Right cardiac atrium (tissue), 5 donors: ENCODE measurements at regions of chr1 and their contacts with region 1.

Region 1: GRCh38 chr1:234499119-234499942 is 20.4 kb upstream of the TARBP1 start:
- DNase-seq: peak; percentile 90 to 97 (median 97)
- ATAC-seq: peak; percentile 95 to 96
- H3K4me3 ChIP-seq: peak overlapping the region; percentile 6
- H3K27ac ChIP-seq: peak overlapping the region; percentile 92
- H3K4me1 ChIP-seq: peaks cover 10% of the 10 kb centered on the region
- H3K27me3 ChIP-seq: no peaks in the 10 kb centered on the region

Region 2: DNA sequence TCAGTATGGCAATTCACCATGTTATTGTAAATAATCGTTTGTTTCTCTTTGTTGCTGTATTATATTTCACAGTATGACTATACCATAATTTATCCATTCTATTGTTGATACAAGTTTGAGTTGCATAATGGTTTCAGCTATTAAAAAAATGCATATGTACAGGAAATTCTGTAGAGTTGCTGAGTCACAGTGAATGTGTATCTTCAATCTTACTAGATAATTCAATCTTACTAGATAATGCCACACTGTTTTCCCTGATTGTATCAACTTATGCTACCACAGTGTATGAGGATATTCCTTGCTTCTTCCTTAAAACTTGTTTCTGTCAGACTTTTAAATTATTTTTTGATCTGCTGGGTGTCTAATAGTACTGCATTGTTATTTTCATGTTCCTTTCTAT is 129.5 kb before region 1 on chr1:
- intact Hi-C with region 1: no loop called
- DNase-seq: no peak
- ATAC-seq: no peak
- H3K4me3 ChIP-seq: no peak overlapping the region
- H3K27ac ChIP-seq: no peak overlapping the region
- H3K4me1 ChIP-seq: no peaks in the 10 kb centered on the region
- H3K27me3 ChIP-seq: no peaks in the 10 kb centered on the region

Region 3: GRCh38 chr1:234589854-234590620 is 90.7 kb after region 1 on chr1:
- intact Hi-C with region 1: loop called in 3 of 4 experiments (anchors 5 to 10 kb)
- DNase-seq: no peak
- ATAC-seq: peak; percentile 16 to 22
- H3K4me3 ChIP-seq: no peak overlapping the region
- H3K27ac ChIP-seq: peak overlapping the region; percentile 47
- H3K4me1 ChIP-seq: peaks cover 11% of the 10 kb centered on the region
- H3K27me3 ChIP-seq: no peaks in the 10 kb centered on the region

Region 4: DNA sequence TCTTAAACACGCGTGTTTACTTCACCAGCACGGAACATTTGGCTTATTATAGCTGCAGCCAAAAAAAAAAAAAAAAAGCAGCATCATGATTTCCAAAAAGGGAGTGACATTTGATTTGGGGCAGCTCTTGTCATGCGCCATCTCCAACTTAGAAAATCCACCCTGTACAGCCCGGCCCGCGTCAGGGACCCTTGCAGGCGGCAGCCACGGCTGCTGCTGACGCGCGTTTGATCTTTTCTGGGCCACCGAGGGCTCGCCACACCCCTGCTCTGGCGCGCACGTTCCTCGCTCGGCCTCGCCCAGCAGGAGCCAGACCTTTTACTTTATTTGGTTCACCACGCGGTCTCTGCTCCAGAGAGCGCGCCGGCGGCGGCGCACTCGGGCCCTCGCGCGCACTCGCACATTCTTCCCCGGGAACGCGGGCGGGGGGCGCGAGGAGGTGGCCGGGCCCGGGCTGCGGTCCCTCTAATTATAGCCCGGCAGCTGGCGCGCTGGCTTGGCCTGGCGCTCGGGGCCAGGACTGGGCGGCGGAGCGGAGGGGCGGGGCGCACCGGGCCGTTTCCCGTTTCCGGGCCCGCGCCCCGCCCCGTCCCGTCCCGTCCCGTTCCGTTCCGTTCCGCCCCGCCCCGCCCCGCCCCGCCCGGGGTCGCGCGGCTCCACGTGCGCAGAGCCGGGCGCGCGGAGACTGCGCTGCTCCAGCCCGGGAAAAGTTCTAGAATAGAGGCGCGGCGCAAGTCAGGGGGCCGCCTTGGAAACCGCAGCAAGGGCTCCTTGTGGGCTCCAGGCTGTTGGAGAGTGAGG is 100.5 kb after region 1 on chr1:
- intact Hi-C with region 1: loop called (anchors 2 to 10 kb)
- DNase-seq: peak; percentile 91 to 96 (median 96)
- ATAC-seq: peak; percentile 93 to 94
- H3K4me3 ChIP-seq: peak overlapping the region; percentile 44
- H3K27ac ChIP-seq: peak overlapping the region; percentile 97
- H3K4me1 ChIP-seq: no peaks in the 10 kb centered on the region
- H3K27me3 ChIP-seq: no peaks in the 10 kb centered on the region

Region 5: DNA sequence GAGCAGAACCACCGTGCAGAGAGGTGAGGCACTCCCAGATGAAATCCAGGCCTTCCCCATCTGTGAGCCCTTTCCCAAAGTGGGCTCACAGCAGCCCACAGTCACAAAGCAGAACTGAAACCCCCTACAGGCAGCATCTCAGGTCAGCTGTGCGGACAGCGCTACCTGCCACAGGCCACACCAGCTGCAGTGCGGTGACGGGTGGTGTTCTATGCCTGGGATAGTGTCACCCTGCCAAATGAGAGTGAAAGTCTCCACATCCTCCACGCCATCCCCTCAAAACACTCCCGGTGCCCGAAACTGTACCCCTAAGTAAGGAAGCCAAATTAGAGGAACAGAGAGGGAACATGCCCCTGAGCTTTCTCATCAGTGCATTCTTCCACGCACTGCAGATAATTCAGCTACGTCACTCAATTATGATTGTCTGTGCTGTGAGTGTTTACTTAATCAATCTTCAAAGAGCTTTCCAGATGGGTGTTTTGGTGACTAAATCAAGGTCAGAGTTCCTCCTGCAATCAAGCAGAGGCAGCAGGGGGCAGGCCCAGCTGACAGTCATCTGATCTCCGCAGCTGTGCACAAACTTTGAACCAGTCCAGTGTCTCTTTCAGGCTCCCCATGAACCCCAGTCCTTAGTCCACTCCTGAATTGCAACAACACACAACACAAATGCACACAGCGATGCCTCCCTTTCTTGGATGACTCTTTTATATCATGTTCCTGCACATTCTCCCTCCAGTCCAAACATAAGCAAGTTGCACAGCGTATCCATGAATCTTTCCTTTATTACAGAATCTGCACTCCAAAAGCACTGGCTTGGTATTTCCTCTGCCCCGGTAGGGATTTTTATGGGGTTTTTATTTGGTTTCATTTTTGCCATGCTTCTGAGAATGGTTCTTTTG is 479.3 kb after region 1 on chr1:
- intact Hi-C with region 1: loop called in 1 of 4 experiments (anchors 10 kb)
- DNase-seq: peak in 1 of 3 donors; percentile 77
- ATAC-seq: peak in 1 of 2 donors; percentile 24
- H3K4me3 ChIP-seq: no peak overlapping the region
- H3K27ac ChIP-seq: peak overlapping the region; percentile 98
- H3K4me1 ChIP-seq: peaks cover 39% of the 10 kb centered on the region
- H3K27me3 ChIP-seq: no peaks in the 10 kb centered on the region

Region 6: DNA sequence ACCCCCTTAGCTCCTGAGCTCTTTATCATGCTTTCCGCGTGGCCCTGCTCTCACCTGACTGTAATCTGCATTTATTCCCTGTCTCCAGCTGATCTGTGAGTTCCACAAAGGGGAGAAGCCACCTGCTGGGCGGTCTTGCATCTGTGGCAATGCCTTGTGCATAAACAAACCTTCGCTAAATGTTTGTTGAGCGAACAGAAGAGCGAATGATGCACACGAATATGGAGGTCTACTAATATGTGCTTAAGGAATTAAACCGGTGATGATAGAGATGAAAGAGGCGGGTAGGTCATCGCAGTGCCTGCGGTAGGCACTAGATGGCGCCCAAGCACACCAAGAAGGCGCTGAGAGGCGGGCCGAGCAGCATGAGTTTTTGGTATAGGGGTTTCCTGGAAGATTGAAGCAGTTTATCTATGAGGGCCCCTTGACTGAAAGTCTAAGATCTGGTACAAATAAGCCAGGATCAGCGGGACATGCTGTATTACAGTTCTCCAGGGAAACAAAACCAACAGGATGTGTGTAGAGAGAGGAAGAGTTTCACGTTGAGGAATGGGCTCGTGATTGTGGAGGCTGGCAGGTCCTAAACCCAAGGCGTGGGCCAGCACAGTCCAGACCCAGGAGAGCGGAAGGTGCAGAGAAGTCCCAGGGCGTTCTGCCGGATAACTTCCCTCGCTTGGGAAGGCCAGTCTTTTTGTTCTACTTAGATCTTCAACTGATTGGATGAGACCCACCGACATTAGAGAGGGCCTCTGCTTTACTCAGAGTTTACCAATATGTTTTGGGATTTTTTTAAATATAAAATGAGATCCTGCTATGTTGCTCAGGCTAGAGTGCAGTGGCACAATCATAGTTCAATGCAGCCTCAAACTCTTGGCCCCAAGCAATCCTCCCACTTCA is 594.6 kb after region 1 on chr1:
- intact Hi-C with region 1: loop called in 2 of 4 experiments (anchors 2 to 5 kb)
- DNase-seq: peak; percentile 74 to 93 (median 89)
- ATAC-seq: peak; percentile 76 to 81
- H3K4me3 ChIP-seq: no peak overlapping the region
- H3K27ac ChIP-seq: no peak overlapping the region
- H3K4me1 ChIP-seq: no peaks in the 10 kb centered on the region
- H3K27me3 ChIP-seq: no peaks in the 10 kb centered on the region